ENCODE measurements at regions of chr18 and their contacts with region 1.

Region 1: DNA sequence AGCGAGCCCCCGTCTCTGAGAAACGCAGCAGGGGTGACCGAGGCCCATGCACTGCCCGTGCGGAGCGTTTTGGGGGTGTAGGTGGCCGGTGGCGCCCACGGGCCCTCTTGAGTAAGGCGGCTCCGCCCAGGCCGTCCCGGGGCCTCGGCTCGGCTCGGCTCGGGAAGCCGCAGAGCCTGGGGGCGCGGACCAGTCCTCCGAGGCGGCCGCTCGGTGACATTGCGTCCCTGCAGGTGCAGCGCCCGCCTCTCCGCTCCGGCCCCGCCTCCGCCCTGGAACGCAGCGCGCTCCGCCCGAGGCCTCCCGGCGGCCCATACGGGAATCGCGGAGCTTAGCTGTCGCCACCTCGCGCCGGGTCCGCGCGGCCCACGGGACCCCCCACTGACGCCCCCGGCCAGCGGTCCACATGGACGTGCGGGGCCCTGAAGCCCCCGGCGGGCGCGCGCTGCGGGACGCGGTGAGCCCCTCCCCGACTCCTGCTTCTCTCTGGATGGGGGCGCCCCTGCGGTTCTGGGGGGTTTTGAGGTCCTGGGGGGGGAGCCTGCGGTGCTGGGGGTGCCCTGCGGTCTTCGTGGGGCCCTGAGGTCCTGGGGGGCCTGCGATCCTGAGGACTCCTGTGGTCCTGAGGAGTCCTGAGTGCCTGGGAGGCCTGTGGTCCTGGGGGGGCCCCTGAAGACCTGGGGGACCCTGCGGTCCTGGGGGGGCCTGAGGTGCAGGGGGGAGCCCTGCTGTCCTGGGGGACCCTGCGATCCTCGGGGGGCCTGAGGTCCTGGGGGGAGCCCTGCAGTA is at the start of gene HSBP1L1:
- DNase-seq: peak; percentile 60 to 75 (median 69)
- ATAC-seq: peak; percentile 89
- H3K4me3 ChIP-seq: peak within 1 kb of the TSS; percentile 22
- H3K4me3 Mint-ChIP-seq: peak within 1 kb of the TSS; percentile 81 to 93 (median 90)
- H3K27ac ChIP-seq: peak within 1 kb of the TSS; percentile 89
- H3K27ac Mint-ChIP-seq: peak within 1 kb of the TSS; percentile 88 to 96 (median 94)
- H3K4me1 ChIP-seq: peaks cover 14 to 19% of the 10 kb centered on the region in 2 donors
- H3K4me1 Mint-ChIP-seq: peaks cover 9 to 47% (median 20%) of the 10 kb centered on the region in 7 donors
- H3K27me3 ChIP-seq: no peaks in the 10 kb centered on the region
- H3K27me3 Mint-ChIP-seq: no peaks in the 10 kb centered on the region
- total RNA-seq, gene HSBP1L1: 13.7 to 44.9 (median 41.7) TPM

Region 2: DNA sequence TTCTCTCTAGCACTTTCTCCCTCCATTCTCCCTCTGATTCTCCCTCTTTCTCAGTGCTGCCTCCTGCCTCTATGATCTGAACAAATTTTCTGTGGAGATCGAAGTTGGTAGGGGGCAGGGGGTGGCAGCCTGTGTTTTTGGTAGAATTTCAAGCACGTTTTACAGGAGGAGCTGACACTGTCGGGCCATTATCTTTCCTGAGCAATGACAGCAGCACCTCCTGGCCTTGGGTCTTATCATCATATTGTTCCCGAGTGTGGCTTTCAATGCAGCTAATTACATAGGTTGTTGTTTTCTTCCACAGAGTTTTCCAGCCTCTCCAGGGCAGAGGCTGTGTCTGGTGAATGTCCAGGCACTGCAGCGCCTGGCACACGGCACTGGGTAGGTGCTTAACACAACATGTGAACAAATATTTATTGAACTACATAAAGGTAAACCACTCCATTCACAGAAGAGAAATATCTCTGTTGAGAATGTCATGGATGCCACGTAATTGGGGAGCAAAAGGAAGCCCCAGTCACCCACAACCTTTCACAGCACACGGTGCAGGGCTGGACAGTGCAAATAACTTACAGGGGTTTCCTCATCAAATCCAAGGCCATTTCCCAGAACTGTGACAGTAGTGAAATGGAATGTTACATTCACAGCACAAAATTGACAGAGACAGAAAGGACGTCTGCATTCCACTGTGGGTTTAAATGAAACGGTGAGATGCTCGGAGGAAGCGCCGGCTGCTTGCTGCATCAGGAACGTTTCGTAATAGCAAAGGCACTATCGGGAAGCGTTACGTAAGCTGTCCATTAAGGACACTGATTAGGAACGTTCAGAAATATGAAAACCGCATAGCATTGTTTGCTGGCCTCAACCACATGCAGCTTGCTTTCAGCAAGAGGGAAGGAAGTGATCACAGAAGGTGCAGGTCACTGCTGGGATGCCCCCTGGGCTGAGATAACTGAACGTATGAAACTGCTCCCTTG is 173.2 kb before region 1 on chr18:
- CTCF ChIA-PET with region 1: no interaction called
- POLR2A ChIA-PET with region 1: no interaction called
- intact Hi-C with region 1: loop called in 1 of 2 experiments (anchors 10 kb)
- DNase-seq: no peak
- ATAC-seq: peak; percentile 72
- H3K4me3 ChIP-seq: no peak overlapping the region
- H3K4me3 Mint-ChIP-seq: peak overlapping the region in 4 of 10 donors; percentile 11 to 45 (median 30)
- H3K27ac ChIP-seq: no peak overlapping the region
- H3K27ac Mint-ChIP-seq: no peak overlapping the region
- H3K4me1 ChIP-seq: no peaks in the 10 kb centered on the region
- H3K4me1 Mint-ChIP-seq: peaks cover 5 to 28% (median 8%) of the 10 kb centered on the region in 7 donors
- H3K27me3 ChIP-seq: peaks cover 0 to 3% of the 10 kb centered on the region in 2 donors
- H3K27me3 Mint-ChIP-seq: peaks cover 58 to 74% (median 67%) of the 10 kb centered on the region in 5 donors

Region 3: GRCh38 chr18:80034068-80034851 is 69.7 kb after region 1 on chr18 and contains the start of gene RBFA:
- CTCF ChIA-PET with region 1: no interaction called
- POLR2A ChIA-PET with region 1: no interaction called
- intact Hi-C with region 1: loop called (anchors 1 kb)
- DNase-seq: peak; percentile 95 to 100 (median 98)
- ATAC-seq: peak; percentile 88
- H3K4me3 ChIP-seq: peak within 1 kb of the TSS; percentile 83
- H3K4me3 Mint-ChIP-seq: peak within 1 kb of the TSS; percentile 84 to 95 (median 91)
- H3K27ac ChIP-seq: peak within 1 kb of the TSS; percentile 87
- H3K27ac Mint-ChIP-seq: peak within 1 kb of the TSS; percentile 86 to 99 (median 96)
- H3K4me1 ChIP-seq: peaks cover 8 to 14% of the 10 kb centered on the region in 2 donors
- H3K4me1 Mint-ChIP-seq: peaks cover 22 to 36% (median 29%) of the 10 kb centered on the region in 7 donors
- H3K27me3 ChIP-seq: no peaks in the 10 kb centered on the region
- H3K27me3 Mint-ChIP-seq: no peaks in the 10 kb centered on the region
- total RNA-seq, gene RBFA: 17.6 to 23.5 (median 21.7) TPM